ENCODE measurements at regions of chr14 and their contacts with region 1.

Region 1: GRCh38 chr14:67166450-67166853 is 22.8 kb upstream of the GARIN2 start:
- DNase-seq: peak in 5 of 9 experiments; percentile 24 to 57 (median 28)
- ATAC-seq: no peak
- H3K4me3 ChIP-seq: no peak overlapping the region
- H3K4me3 Mint-ChIP-seq: no peak overlapping the region
- H3K27ac ChIP-seq: no peak overlapping the region
- H3K27ac Mint-ChIP-seq: no peak overlapping the region
- H3K4me1 ChIP-seq: no peaks in the 10 kb centered on the region
- H3K4me1 Mint-ChIP-seq: no peaks in the 10 kb centered on the region
- H3K27me3 ChIP-seq: no peaks in the 10 kb centered on the region
- H3K27me3 Mint-ChIP-seq: no peaks in the 10 kb centered on the region
- CTCF ChIP-seq: peak; percentile 84

Region 2: GRCh38 chr14:67335781-67336180 is 169.3 kb after region 1 on chr14:
- CTCF ChIA-PET with region 1: no interaction called
- POLR2A ChIA-PET with region 1: no interaction called
- intact Hi-C with region 1: loop called in 1 of 2 experiments (anchors 5 kb)
- DNase-seq: peak in 2 of 9 experiments; percentile 23 to 40
- ATAC-seq: no peak
- H3K4me3 ChIP-seq: no peak overlapping the region
- H3K4me3 Mint-ChIP-seq: no peak overlapping the region
- H3K27ac ChIP-seq: no peak overlapping the region
- H3K27ac Mint-ChIP-seq: no peak overlapping the region
- H3K4me1 ChIP-seq: no peaks in the 10 kb centered on the region
- H3K4me1 Mint-ChIP-seq: no peaks in the 10 kb centered on the region
- H3K27me3 ChIP-seq: no peaks in the 10 kb centered on the region
- H3K27me3 Mint-ChIP-seq: no peaks in the 10 kb centered on the region
- CTCF ChIP-seq: peak; percentile 35

Measured in CD8-positive, alpha-beta T cell (primary cell).